Calu3 (cell line): ENCODE measurements at regions of chr2 and their contacts with region 1.

Region 1: DNA sequence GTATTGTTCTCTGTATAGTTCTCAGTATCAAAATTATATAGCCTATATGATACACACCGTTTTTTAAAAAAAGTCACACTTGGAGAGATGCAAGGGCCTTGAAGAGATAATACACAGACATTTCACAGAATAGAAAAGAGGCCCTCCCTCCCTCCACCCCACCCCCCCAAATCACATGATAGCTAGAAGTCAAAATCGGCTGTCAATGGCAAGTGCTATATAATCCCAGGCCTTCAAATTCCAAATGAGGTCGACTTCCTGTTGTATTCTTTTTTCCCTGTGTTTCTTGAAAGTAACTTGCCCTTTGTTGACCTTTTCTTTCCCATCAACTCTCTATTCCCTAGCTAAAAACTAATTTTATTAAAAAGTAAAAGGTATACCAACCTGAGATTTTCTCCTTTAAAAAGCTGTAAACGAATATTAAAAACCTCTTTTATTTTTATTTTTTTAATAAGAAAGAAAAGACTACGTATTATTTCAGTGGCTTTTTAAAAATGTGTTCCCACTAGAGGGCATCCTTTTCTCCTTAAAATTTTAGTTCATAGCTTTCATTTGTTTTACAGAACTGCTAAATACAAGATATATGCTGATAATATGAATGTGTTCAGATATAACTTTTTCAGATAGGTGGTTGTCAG is 46.6 kb downstream of the KCMF1 start:
- DNase-seq: no peak
- H3K4me3 Mint-ChIP-seq: no peak overlapping the region
- H3K27ac Mint-ChIP-seq: peak overlapping the region; percentile 39
- H3K4me1 Mint-ChIP-seq: peaks cover 55% of the 10 kb centered on the region
- H3K27me3 Mint-ChIP-seq: no peaks in the 10 kb centered on the region
- CTCF ChIP-seq: no peak

Region 2: GRCh38 chr2:84970868-84971509 is 46.5 kb before region 1 on chr2 and contains the start of gene KCMF1:
- CTCF ChIA-PET with region 1: interaction called, 6 read pairs
- intact Hi-C with region 1: loop called (anchors 1 kb)
- DNase-seq: peak; percentile 84
- H3K4me3 Mint-ChIP-seq: peak within 1 kb of the TSS; percentile 71
- H3K27ac Mint-ChIP-seq: peak within 1 kb of the TSS; percentile 99
- H3K4me1 Mint-ChIP-seq: peaks cover 19% of the 10 kb centered on the region
- H3K27me3 Mint-ChIP-seq: no peaks in the 10 kb centered on the region
- CTCF ChIP-seq: no peak
- total RNA-seq, gene KCMF1: 68.0 and 69.8 TPM in 2 replicates

Region 3: DNA sequence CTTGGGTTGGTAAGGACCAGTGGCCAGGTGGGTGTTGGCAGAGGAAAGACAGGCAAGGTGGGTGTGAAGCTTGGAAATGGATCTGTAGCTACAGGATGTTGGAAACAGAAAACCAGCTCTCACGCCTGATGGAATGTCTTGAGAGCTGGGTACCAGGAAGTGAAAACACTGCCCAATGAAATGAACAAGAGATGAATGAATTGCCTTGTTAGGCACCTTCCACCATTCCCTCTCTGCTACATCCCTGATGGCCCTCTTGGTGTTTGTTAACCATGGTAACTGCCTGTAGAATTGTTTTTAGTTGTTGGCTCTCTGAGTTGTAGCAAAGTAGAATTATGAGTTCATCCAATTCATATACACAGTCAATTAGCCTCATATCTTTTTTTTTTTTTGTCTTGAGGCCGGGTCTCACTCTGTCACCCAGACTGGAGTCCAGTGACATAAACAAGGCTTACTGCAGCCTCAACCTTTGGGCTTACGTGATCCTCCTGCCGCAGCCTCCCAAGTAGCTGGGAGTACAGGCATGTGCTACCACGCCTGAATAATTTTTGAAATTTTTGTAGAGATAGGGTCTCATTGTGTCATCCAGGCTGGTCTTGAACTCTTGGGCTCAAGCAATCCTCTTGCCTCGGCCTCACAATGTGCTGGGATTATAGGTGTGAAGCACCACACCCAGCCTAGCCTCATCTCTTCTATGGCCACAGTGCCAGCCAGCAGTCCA is 37.1 kb before region 1 on chr2:
- CTCF ChIA-PET with region 1: interaction called, 12 read pairs
- intact Hi-C with region 1: no loop called
- DNase-seq: peak; percentile 45
- H3K4me3 Mint-ChIP-seq: no peak overlapping the region
- H3K27ac Mint-ChIP-seq: peak overlapping the region; percentile 62
- H3K4me1 Mint-ChIP-seq: peaks cover 21% of the 10 kb centered on the region
- H3K27me3 Mint-ChIP-seq: no peaks in the 10 kb centered on the region
- CTCF ChIP-seq: no peak

Region 4: DNA sequence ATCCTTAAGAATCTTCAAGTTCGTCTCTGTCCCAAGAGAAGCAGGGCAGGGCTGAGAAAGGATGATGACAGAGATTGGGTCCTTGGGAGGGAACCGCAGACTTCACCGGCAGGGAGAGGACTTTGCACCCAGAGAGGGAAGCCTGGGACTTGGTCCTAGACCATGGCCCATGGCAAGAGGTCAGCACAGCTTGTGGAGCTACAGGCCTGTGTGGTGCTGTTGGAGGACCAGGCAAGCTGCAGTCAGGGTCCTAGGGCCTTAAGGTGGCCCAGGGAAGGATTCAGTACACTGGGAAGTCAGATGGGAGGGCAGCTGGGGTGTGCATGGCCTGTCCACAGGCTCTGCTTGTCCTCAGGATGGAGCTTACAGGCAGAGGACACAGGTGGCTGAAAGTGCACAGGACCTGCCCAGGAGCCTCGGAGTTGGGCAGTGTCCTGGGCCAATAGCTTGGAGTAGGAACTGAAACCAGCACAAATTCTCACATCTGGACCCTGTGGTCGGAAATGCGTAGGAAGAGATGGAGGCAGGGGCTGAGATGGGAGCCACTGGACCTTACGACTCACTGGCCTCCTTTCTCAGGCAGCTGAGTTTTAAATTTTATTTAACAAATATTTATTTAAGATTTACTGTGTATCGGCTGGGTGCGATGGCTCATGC is 59.2 kb after region 1 on chr2:
- CTCF ChIA-PET with region 1: no interaction called
- intact Hi-C with region 1: no loop called
- DNase-seq: no peak
- H3K4me3 Mint-ChIP-seq: no peak overlapping the region
- H3K27ac Mint-ChIP-seq: no peak overlapping the region
- H3K4me1 Mint-ChIP-seq: no peaks in the 10 kb centered on the region
- H3K27me3 Mint-ChIP-seq: peaks cover 9% of the 10 kb centered on the region
- CTCF ChIP-seq: no peak

Region 5: DNA sequence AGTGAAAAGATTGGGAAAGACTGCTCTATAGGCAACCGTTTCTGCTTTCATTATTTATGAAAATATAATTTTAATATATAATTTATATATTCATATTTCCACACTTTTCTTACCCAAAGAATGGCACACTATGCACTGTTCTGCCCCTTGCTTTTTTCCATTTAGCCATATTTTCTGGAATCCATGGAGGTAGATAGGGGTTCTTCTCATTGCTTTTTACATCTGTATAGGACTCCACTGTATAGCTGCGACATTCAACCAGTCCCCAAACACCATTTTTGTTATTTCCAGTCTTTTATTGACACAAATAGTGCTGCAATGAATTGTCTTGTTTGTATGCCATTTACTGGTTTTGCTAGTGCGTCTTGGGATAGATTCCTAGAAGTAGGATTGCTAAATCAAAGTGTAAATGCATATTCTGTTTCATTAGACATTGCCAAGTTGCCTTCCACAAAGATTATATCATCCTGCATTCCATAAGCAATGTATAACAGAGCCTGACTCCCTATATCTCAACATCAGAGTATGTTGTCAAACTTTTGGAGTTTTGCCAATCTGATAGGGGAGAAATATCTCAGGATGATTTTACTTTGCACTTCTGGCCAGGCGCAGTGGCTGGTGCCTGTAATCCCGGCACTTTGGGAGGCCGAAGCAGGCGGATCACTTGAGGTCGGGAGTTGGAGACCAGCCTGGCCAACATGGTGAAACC is 89.1 kb after region 1 on chr2:
- CTCF ChIA-PET with region 1: no interaction called
- intact Hi-C with region 1: no loop called
- DNase-seq: peak; percentile 4
- H3K4me3 Mint-ChIP-seq: no peak overlapping the region
- H3K27ac Mint-ChIP-seq: no peak overlapping the region
- H3K4me1 Mint-ChIP-seq: no peaks in the 10 kb centered on the region
- H3K27me3 Mint-ChIP-seq: peaks cover 14% of the 10 kb centered on the region
- CTCF ChIP-seq: no peak